GM12878 (cell line): ENCODE measurements at regions of chr5 and their contacts with region 1.

Region 1: DNA sequence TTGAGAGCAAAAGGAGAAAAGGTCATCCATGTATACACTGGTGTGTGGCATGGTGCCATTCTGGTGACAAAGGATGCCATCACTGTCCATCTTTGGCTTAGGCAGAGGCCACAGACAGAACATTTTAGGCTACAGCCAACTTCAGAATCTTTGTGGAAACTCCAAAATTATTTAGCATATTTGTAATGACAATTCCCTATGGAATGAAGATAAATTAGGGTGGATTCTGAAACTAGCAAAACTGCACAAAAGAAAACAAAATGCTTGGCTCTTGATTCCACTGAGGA is 92.5 kb downstream of the FBXW11 start:
- DNase-seq: no peak
- ATAC-seq: no peak; the same call in 2 of the 3 replicates
- H3K4me3 ChIP-seq: no peak overlapping the region
- H3K27ac ChIP-seq: peak overlapping the region; percentile 49
- H3K4me1 ChIP-seq: peaks cover 25% of the 10 kb centered on the region
- H3K27me3 ChIP-seq: no peaks in the 10 kb centered on the region
- CTCF ChIP-seq: no peak
- EP300 ChIP-seq: no peak
- POLR2A ChIP-seq: no peak
- RAD21 ChIP-seq: no peak

Region 2: GRCh38 chr5:171614971-171615653 is 298.8 kb before region 1 on chr5:
- CTCF ChIA-PET with region 1: no interaction called
- POLR2A ChIA-PET with region 1: no interaction called
- RAD21 ChIA-PET with region 1: no interaction called
- SMC1A ChIA-PET with region 1: no interaction called
- in situ Hi-C with region 1: no loop called
- intact Hi-C with region 1: no loop called
- DNase-seq: no peak
- ATAC-seq: no peak
- H3K4me3 ChIP-seq: no peak overlapping the region
- H3K27ac ChIP-seq: no peak overlapping the region
- H3K4me1 ChIP-seq: no peaks in the 10 kb centered on the region
- H3K27me3 ChIP-seq: peaks cover 0 to 3% of the 10 kb centered on the region in 2 experiments; a peak in 2 of 4 replicates
- CTCF ChIP-seq: no peak
- EP300 ChIP-seq: no peak
- POLR2A ChIP-seq: no peak
- RAD21 ChIP-seq: no peak

Region 3: DNA sequence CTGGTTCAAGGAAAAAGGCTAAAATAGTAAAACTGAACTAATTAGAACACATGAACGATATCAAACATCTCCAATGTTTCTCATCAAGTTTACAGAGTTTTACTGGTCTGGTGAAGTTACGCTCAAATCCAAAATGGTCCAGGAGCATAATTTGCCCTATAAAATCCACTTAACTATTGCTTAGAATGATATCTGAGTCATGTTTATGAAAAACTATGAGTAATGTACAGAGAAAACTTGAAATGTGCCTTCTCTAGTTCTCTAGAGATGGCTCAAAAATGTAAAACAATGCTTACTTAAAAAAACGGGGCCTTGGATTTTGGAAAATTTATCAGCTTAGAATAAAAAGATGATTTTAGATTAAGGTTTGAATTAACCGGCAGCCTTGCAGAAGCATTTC is 15.5 kb before region 1 on chr5:
- CTCF ChIA-PET with region 1: interaction called, 16 read pairs
- POLR2A ChIA-PET with region 1: no interaction called
- RAD21 ChIA-PET with region 1: interaction called, 10 read pairs
- SMC1A ChIA-PET with region 1: interaction called, 15 read pairs
- in situ Hi-C with region 1: no loop called
- intact Hi-C with region 1: no loop called
- DNase-seq: no peak
- ATAC-seq: no peak
- H3K4me3 ChIP-seq: no peak overlapping the region
- H3K27ac ChIP-seq: no peak overlapping the region
- H3K4me1 ChIP-seq: no peaks in the 10 kb centered on the region
- H3K27me3 ChIP-seq: no peaks in the 10 kb centered on the region
- CTCF ChIP-seq: no peak
- EP300 ChIP-seq: no peak
- POLR2A ChIP-seq: no peak
- RAD21 ChIP-seq: no peak

Region 4: DNA sequence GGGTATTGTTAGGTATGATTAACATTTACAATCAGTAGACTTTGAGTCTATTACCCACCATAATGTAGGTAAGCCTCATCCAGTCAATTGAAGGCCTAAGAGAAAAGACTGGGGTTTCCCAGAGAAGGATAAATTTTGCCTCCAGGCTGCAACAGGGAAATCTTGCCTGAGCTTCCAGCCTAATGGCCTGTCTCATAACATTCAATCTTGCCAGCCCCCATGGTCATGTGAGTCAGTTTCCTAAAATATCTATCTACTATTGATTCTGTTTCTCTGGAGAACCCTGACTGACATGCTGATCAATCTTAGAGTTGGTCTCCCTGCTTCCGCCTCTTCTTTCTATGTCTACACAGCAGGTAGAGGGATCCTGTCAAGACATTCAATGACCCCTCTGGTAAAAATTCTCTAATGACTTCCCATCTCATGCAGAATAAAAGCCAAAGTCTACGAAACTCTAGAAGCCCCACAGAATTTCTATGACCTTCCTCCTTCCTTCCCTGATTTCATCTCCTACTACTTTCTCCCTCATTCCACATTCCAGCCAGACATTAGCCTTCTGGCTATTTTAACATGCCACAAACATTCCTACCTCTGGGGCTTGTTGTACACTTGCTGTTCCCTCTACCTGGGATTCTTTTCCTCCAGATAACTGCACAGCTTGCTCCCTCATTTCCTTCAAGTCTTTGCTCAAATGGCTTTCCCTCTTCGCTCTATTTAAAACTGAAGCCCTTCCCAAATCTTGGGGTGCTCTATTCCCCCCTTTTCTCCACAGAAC is 32.3 kb after region 1 on chr5:
- CTCF ChIA-PET with region 1: interaction called, 16 read pairs
- POLR2A ChIA-PET with region 1: no interaction called
- RAD21 ChIA-PET with region 1: interaction called, 4 read pairs
- SMC1A ChIA-PET with region 1: interaction called, 9 read pairs
- in situ Hi-C with region 1: no loop called
- intact Hi-C with region 1: no loop called
- DNase-seq: no peak
- ATAC-seq: no peak
- H3K4me3 ChIP-seq: no peak overlapping the region
- H3K27ac ChIP-seq: no peak overlapping the region
- H3K4me1 ChIP-seq: peaks cover 6% of the 10 kb centered on the region; the same call in 1 of the 2 replicates
- H3K27me3 ChIP-seq: no peaks in the 10 kb centered on the region
- CTCF ChIP-seq: no peak
- EP300 ChIP-seq: no peak
- POLR2A ChIP-seq: no peak
- RAD21 ChIP-seq: no peak

Region 5: DNA sequence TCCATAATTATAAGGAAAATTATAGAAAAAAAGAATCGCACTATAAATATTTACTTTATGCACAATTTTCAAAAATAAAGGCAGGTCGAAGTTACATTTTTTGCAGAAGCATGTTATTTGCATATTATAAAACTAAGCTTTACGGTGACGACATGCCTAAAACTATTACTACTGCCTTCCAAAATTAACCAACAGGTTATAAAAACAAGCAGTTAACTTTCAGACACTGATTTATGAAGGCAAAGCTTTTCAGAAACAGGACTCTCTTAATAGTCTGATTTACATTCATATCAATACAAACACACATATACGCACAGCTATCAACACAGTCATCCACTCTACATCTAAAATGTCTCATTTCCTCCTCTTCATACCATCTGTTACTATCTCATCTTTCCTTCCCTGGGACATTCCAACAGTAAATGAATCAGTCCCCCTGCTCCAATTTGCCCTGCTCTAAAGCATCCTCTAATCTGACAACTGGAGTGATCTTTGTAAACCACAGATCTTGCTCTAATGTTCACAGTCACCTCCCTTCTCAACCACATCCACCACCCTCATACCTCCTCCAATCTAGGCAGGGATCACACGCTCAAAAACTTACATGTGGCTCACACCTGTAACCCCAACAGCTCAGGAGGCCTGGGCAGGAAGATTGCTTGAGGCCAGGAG is 71.0 kb after region 1 on chr5:
- CTCF ChIA-PET with region 1: interaction called, 18 read pairs
- POLR2A ChIA-PET with region 1: no interaction called
- RAD21 ChIA-PET with region 1: interaction called, 26 read pairs
- SMC1A ChIA-PET with region 1: interaction called, 15 read pairs
- in situ Hi-C with region 1: no loop called
- intact Hi-C with region 1: no loop called
- DNase-seq: no peak
- ATAC-seq: peak; percentile 61
- H3K4me3 ChIP-seq: no peak overlapping the region
- H3K27ac ChIP-seq: peak overlapping the region; percentile 40; the same call in 1 of the 2 replicates
- H3K4me1 ChIP-seq: peaks cover 53% of the 10 kb centered on the region
- H3K27me3 ChIP-seq: no peaks in the 10 kb centered on the region
- CTCF ChIP-seq: no peak
- EP300 ChIP-seq: no peak
- POLR2A ChIP-seq: no peak
- RAD21 ChIP-seq: no peak

Region 6: GRCh38 chr5:172015346-172015745 is 101.4 kb after region 1 on chr5:
- CTCF ChIA-PET with region 1: interaction called, 179 read pairs
- POLR2A ChIA-PET with region 1: no interaction called
- RAD21 ChIA-PET with region 1: interaction called, 97 read pairs
- SMC1A ChIA-PET with region 1: interaction called, 167 read pairs
- in situ Hi-C with region 1: no loop called
- intact Hi-C with region 1: no loop called
- DNase-seq: no peak
- ATAC-seq: no peak
- H3K4me3 ChIP-seq: no peak overlapping the region
- H3K27ac ChIP-seq: no peak overlapping the region
- H3K4me1 ChIP-seq: no peaks in the 10 kb centered on the region
- H3K27me3 ChIP-seq: no peaks in the 10 kb centered on the region
- CTCF ChIP-seq: no peak
- EP300 ChIP-seq: no peak
- POLR2A ChIP-seq: no peak
- RAD21 ChIP-seq: no peak

Region 7: DNA sequence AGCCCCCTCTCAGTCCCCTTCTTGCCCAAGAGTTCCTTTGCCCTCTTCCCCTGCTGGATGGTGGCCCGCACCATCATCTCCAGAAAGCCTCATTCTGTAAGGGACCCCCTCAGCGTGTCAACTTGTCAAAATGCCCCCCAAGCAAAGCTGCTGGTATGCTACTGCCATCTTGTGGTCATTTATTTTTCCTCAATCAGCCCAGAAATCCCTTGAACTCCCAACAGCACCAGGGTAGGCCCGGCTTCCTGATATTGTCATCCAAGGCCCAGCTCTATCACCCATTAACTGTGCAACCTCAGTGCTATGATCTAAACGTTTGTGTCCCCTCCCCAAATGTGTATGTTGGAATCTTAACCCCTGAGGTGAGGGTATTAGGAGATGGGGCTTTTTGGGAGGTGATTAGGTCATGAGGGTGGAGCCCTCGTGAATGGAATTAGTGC is 145.8 kb after region 1 on chr5:
- CTCF ChIA-PET with region 1: interaction called, 40 read pairs
- POLR2A ChIA-PET with region 1: no interaction called
- RAD21 ChIA-PET with region 1: interaction called, 36 read pairs
- SMC1A ChIA-PET with region 1: interaction called, 32 read pairs
- in situ Hi-C with region 1: no loop called
- intact Hi-C with region 1: no loop called
- DNase-seq: no peak
- ATAC-seq: peak; percentile 50
- H3K4me3 ChIP-seq: no peak overlapping the region
- H3K27ac ChIP-seq: no peak overlapping the region
- H3K4me1 ChIP-seq: no peaks in the 10 kb centered on the region
- H3K27me3 ChIP-seq: no peaks in the 10 kb centered on the region
- CTCF ChIP-seq: peak; percentile 43 to 49 (median 43)
- EP300 ChIP-seq: no peak
- POLR2A ChIP-seq: no peak
- RAD21 ChIP-seq: peak; percentile 59

Region 8: GRCh38 chr5:172293054-172293744 is 379.3 kb after region 1 on chr5:
- CTCF ChIA-PET with region 1: interaction called, 25 read pairs
- POLR2A ChIA-PET with region 1: no interaction called
- RAD21 ChIA-PET with region 1: interaction called, 3 read pairs
- SMC1A ChIA-PET with region 1: interaction called, 10 read pairs
- in situ Hi-C with region 1: no loop called
- intact Hi-C with region 1: loop called (anchors 5 kb)
- DNase-seq: no peak
- ATAC-seq: peak; percentile 100
- H3K4me3 ChIP-seq: no peak overlapping the region
- H3K27ac ChIP-seq: no peak overlapping the region
- H3K4me1 ChIP-seq: no peaks in the 10 kb centered on the region
- H3K27me3 ChIP-seq: no peaks in the 10 kb centered on the region
- CTCF ChIP-seq: peak; percentile 87 to 94 (median 93)
- EP300 ChIP-seq: no peak
- POLR2A ChIP-seq: no peak
- RAD21 ChIP-seq: peak; percentile 98